GM13977 (cell line): ENCODE measurements at regions of chr16 and their contacts with region 1.

Region 1: DNA sequence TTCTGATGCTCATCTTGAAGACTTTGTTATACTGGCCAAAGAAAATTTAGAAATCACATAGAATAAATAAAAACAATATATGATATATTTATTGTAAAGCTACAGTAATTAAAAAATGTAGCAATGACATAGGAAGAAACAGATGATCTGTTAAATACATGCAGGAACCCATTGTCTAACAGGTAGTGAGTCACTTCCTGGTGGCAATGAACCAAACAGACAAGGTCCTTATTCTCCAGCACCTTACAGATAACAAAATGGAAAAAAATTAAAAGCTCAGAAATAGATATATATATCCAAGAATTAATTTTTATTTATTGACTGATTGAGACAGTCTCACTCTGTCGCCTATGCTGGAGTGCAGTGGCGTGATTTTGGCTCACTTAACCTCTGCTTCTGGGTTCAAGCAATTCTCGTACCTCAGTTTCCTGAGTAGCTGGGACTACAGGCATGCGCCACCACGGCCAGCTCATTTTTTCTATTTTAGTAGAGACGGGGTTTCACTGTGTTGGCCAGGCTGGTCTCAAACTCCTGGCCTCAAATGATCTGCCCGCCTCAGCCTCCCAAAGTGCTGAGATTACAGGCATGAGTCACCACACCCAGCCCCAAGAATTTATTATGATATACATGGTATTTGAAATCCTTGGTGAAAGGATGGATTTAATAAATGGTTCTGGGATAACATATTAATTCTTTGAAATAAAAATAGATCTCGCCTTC is 7.5 kb downstream of the NETO2 start:
- DNase-seq: no peak
- CTCF ChIP-seq: no peak

Region 2: GRCh38 chr16:47037746-47038458 is 98.4 kb before region 1 on chr16:
- in situ Hi-C with region 1: loop called (anchors 10 kb)
- DNase-seq: peak; percentile 94
- CTCF ChIP-seq: peak; percentile 98

Region 3: DNA sequence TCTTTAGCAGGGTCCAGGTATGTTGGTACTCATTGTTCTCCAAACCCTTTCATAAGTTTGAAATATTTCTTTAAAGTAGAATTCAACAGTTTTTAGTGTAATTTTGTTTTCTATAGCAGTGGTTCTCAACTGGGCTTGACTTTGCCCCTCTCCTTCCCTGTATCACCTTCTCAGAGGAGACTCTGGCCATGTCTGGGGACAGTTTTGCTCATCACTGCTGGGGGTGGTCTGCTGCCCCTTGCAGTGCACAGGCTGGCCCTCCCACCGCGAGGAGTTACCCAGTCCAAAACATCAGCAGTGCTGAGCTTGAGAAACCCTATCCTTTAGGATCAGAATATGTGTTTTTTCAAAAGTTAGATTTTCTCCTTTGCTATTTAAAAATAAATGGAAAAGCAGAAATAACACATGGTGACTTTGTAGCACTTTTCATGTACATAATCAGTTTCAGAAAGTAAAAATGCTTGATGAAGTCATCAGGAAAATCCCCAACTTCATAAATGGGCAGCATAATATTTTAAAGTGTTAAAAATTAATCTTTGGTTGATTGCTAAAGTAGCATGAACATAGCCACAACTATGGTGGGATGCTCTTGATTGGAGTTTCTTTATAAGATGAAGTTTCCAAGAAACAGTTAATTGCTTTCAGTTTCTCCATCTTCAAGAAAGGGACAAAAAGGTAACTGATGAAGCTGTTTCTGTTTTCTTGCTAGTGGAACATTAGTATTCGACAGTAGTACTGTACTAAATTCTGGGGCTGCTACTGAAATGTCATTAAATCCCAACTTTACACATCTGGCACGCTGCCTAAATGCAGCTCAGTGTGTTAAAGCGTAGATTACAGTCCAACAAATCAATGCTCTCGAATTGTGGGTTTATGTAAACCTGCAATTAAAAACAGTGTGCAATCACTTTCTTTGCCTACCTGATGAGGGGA is 62.8 kb before region 1 on chr16:
- in situ Hi-C with region 1: no loop called
- DNase-seq: no peak
- CTCF ChIP-seq: no peak